CD4-positive, alpha-beta T cell (primary cell): ENCODE measurements at regions of chr6 and their contacts with region 1.

Region 1: GRCh38 chr6:149431905-149432775 is 32.1 kb downstream of the SUMO4 start:
- DNase-seq: peak; percentile 78 to 94 (median 88)
- ATAC-seq: peak; percentile 84
- H3K4me3 ChIP-seq: peak overlapping the region; percentile 17
- H3K4me3 Mint-ChIP-seq: peak overlapping the region; percentile 45
- H3K27ac ChIP-seq: no peak overlapping the region
- H3K27ac Mint-ChIP-seq: no peak overlapping the region
- H3K4me1 ChIP-seq: peaks cover 6% of the 10 kb centered on the region
- H3K4me1 Mint-ChIP-seq: peaks cover 6% of the 10 kb centered on the region
- H3K27me3 ChIP-seq: no peaks in the 10 kb centered on the region
- H3K27me3 Mint-ChIP-seq: no peaks in the 10 kb centered on the region
- CTCF ChIP-seq: peak; percentile 96

Region 2: GRCh38 chr6:148578245-148578732 is 853.9 kb before region 1 on chr6:
- CTCF ChIA-PET with region 1: no interaction called
- POLR2A ChIA-PET with region 1: no interaction called
- intact Hi-C with region 1: loop called in 1 of 2 experiments (anchors 5 kb)
- DNase-seq: peak in 9 of 14 experiments; percentile 9 to 73 (median 15)
- ATAC-seq: peak; percentile 93
- H3K4me3 ChIP-seq: no peak overlapping the region
- H3K4me3 Mint-ChIP-seq: no peak overlapping the region
- H3K27ac ChIP-seq: no peak overlapping the region
- H3K27ac Mint-ChIP-seq: no peak overlapping the region
- H3K4me1 ChIP-seq: no peaks in the 10 kb centered on the region
- H3K4me1 Mint-ChIP-seq: no peaks in the 10 kb centered on the region
- H3K27me3 ChIP-seq: peaks cover 0 to 7% of the 10 kb centered on the region in 2 experiments
- H3K27me3 Mint-ChIP-seq: peaks cover 44% of the 10 kb centered on the region
- CTCF ChIP-seq: peak; percentile 29

Region 3: DNA sequence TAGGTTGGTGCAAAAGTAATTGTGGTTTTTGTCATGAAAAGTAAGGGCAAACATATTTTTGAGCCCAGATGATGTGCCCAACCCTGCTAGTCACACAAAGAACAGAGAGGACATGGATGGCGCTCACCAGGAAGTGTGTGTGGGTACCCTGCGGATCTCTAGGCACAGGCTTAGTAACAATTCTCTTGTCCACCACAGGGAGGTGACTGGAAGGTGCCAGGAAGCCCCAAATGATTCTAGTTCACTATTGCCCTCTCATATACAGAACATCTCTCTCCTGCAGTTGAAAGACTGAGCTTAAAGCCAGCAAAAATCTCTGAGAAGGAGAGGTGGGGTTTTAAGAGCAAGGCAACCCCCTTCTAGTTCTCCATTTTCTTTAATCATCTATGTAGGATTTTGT is 386.7 kb before region 1 on chr6:
- CTCF ChIA-PET with region 1: interaction called, 10 read pairs
- POLR2A ChIA-PET with region 1: interaction called, 3 read pairs
- intact Hi-C with region 1: no loop called
- DNase-seq: peak in 4 of 14 experiments; percentile 38 to 57 (median 46)
- ATAC-seq: peak; percentile 90
- H3K4me3 ChIP-seq: no peak overlapping the region
- H3K4me3 Mint-ChIP-seq: peak overlapping the region; percentile 22
- H3K27ac ChIP-seq: no peak overlapping the region
- H3K27ac Mint-ChIP-seq: peak overlapping the region; percentile 7
- H3K4me1 ChIP-seq: peaks cover 23% of the 10 kb centered on the region
- H3K4me1 Mint-ChIP-seq: peaks cover 39% of the 10 kb centered on the region
- H3K27me3 ChIP-seq: no peaks in the 10 kb centered on the region
- H3K27me3 Mint-ChIP-seq: no peaks in the 10 kb centered on the region
- CTCF ChIP-seq: no peak

Region 4: GRCh38 chr6:149082286-149082707 is 349.8 kb before region 1 on chr6:
- CTCF ChIA-PET with region 1: interaction called, 20 read pairs
- POLR2A ChIA-PET with region 1: interaction called, 10 read pairs
- intact Hi-C with region 1: loop called (anchors 1 kb)
- DNase-seq: peak; percentile 76 to 95 (median 86)
- ATAC-seq: peak; percentile 92
- H3K4me3 ChIP-seq: no peak overlapping the region
- H3K4me3 Mint-ChIP-seq: no peak overlapping the region
- H3K27ac ChIP-seq: no peak overlapping the region
- H3K27ac Mint-ChIP-seq: no peak overlapping the region
- H3K4me1 ChIP-seq: peaks cover 15% of the 10 kb centered on the region
- H3K4me1 Mint-ChIP-seq: peaks cover 39% of the 10 kb centered on the region
- H3K27me3 ChIP-seq: no peaks in the 10 kb centered on the region
- H3K27me3 Mint-ChIP-seq: no peaks in the 10 kb centered on the region
- CTCF ChIP-seq: peak; percentile 90

Region 5: GRCh38 chr6:149235130-149235561 is 197.0 kb before region 1 on chr6:
- CTCF ChIA-PET with region 1: interaction called, 11 read pairs
- POLR2A ChIA-PET with region 1: no interaction called
- intact Hi-C with region 1: no loop called
- DNase-seq: peak in 2 of 14 experiments; percentile 46 to 47
- ATAC-seq: no peak
- H3K4me3 ChIP-seq: no peak overlapping the region
- H3K4me3 Mint-ChIP-seq: peak overlapping the region; percentile 13
- H3K27ac ChIP-seq: peak overlapping the region in 1 of 2 donors; percentile 87
- H3K27ac Mint-ChIP-seq: peak overlapping the region; percentile 87
- H3K4me1 ChIP-seq: peaks cover 35% of the 10 kb centered on the region
- H3K4me1 Mint-ChIP-seq: peaks cover 45% of the 10 kb centered on the region
- H3K27me3 ChIP-seq: no peaks in the 10 kb centered on the region
- H3K27me3 Mint-ChIP-seq: no peaks in the 10 kb centered on the region
- CTCF ChIP-seq: no peak

Region 6: GRCh38 chr6:149419696-149420404 is 12.3 kb before region 1 on chr6:
- CTCF ChIA-PET with region 1: interaction called, 14 read pairs
- POLR2A ChIA-PET with region 1: interaction called, 3 read pairs
- intact Hi-C with region 1: no loop called
- DNase-seq: no peak
- ATAC-seq: no peak
- H3K4me3 ChIP-seq: no peak overlapping the region
- H3K4me3 Mint-ChIP-seq: no peak overlapping the region
- H3K27ac ChIP-seq: no peak overlapping the region
- H3K27ac Mint-ChIP-seq: no peak overlapping the region
- H3K4me1 ChIP-seq: no peaks in the 10 kb centered on the region
- H3K4me1 Mint-ChIP-seq: peaks cover 6% of the 10 kb centered on the region
- H3K27me3 ChIP-seq: no peaks in the 10 kb centered on the region
- H3K27me3 Mint-ChIP-seq: no peaks in the 10 kb centered on the region
- CTCF ChIP-seq: no peak

Region 7: GRCh38 chr6:149454386-149454848 is 22.3 kb after region 1 on chr6:
- CTCF ChIA-PET with region 1: no interaction called
- POLR2A ChIA-PET with region 1: no interaction called
- intact Hi-C with region 1: no loop called
- DNase-seq: no peak
- ATAC-seq: no peak
- H3K4me3 ChIP-seq: no peak overlapping the region
- H3K4me3 Mint-ChIP-seq: no peak overlapping the region
- H3K27ac ChIP-seq: no peak overlapping the region
- H3K27ac Mint-ChIP-seq: no peak overlapping the region
- H3K4me1 ChIP-seq: peaks cover 12% of the 10 kb centered on the region
- H3K4me1 Mint-ChIP-seq: peaks cover 6% of the 10 kb centered on the region
- H3K27me3 ChIP-seq: no peaks in the 10 kb centered on the region
- H3K27me3 Mint-ChIP-seq: no peaks in the 10 kb centered on the region
- CTCF ChIP-seq: no peak

Region 8: DNA sequence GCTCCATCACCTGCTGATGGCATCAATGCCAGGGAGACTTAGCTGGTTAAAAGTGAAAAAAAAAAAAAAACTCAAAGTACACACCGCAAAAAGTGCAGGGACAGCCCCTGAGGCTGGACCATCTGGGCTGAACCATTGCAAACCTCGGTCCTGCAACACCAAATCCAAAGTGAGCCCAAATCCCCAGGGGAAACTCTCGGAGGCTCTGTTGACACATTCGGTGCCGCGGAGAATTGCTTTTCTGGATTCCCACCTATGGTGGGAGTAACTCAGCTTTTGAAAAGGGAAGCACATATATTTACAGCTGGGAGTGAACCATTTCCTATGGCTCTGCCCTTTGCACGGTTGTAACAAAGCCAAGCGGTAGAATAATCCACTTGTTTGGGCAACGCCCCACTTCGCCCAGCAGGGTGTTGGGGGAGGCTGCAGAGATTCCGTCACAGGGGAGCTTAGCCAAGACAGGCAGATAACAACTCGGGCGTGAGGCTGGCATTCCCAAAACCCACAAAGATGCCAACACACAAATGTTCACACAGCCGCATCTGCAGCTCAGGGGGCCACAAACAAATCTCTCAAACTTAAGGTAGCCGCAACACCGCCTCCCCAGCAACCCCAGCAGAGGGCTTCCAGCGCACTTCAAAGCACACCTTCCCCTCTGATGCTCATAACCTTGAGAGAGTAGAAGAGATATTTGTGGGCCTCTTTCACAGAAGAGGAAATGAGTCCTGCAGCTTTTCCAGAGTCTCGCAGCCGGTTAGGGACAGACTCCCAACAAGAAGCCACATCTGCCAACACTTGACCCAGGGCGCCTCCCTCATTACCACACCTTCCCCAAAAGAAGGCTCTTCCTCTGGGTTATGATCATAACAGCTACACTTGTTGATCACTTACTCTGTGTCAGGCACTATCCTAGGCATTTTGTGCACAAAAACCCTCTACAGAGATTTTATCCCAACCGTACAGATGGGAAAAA is 41.2 kb after region 1 on chr6:
- CTCF ChIA-PET with region 1: no interaction called
- POLR2A ChIA-PET with region 1: no interaction called
- intact Hi-C with region 1: no loop called
- DNase-seq: peak in 4 of 14 experiments; percentile 27 to 62 (median 42)
- ATAC-seq: peak; percentile 61
- H3K4me3 ChIP-seq: peak overlapping the region; percentile 4
- H3K4me3 Mint-ChIP-seq: peak overlapping the region; percentile 60
- H3K27ac ChIP-seq: peak overlapping the region; percentile 3 to 27
- H3K27ac Mint-ChIP-seq: peak overlapping the region; percentile 82
- H3K4me1 ChIP-seq: peaks cover 94% of the 10 kb centered on the region
- H3K4me1 Mint-ChIP-seq: peaks cover 53% of the 10 kb centered on the region
- H3K27me3 ChIP-seq: no peaks in the 10 kb centered on the region
- H3K27me3 Mint-ChIP-seq: no peaks in the 10 kb centered on the region
- CTCF ChIP-seq: peak; percentile 3

Region 9: DNA sequence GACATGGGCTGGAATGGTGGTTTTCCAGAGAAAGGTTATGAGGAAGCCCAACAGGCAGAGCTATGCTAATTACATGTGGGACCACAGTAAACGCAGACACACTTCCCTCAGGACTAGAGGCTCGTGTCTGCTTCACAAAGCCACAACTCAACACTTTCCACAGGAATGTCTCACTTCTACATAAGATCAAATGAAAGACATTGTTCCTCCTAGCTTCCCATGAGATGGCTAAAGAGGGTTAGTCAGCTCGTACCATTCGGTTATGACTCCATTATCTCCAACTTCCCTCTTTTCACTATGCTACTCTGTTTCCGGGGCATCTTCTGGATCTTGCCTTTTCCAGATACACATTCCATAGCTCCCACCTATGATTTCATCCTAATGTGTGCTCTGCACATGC is 81.8 kb after region 1 on chr6:
- CTCF ChIA-PET with region 1: interaction called, 24 read pairs
- POLR2A ChIA-PET with region 1: no interaction called
- intact Hi-C with region 1: loop called in 1 of 2 experiments (anchors 1 kb)
- DNase-seq: peak in 1 of 14 experiments; percentile 27
- ATAC-seq: no peak
- H3K4me3 ChIP-seq: no peak overlapping the region
- H3K4me3 Mint-ChIP-seq: no peak overlapping the region
- H3K27ac ChIP-seq: no peak overlapping the region
- H3K27ac Mint-ChIP-seq: no peak overlapping the region
- H3K4me1 ChIP-seq: no peaks in the 10 kb centered on the region
- H3K4me1 Mint-ChIP-seq: peaks cover 37% of the 10 kb centered on the region
- H3K27me3 ChIP-seq: no peaks in the 10 kb centered on the region
- H3K27me3 Mint-ChIP-seq: no peaks in the 10 kb centered on the region
- CTCF ChIP-seq: no peak

Region 10: DNA sequence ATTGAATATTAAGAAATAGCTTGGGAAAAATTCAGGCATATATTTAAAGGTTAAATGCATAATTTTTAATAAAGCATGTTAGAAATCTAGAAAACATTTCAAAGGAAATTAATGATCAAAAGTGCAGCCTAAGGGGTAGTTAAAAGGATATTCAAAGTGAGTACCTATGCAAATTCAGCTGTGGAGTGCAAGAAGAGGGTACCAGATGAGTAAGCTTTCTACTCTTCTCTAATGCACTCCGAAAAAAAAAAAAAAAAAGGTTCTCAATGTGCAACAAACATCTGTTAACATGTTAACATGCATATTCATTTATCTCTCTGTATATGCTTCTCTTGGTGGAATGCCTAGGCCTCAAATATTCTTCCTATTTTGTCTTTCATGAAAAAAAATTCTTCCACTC is 248.4 kb after region 1 on chr6:
- CTCF ChIA-PET with region 1: no interaction called
- POLR2A ChIA-PET with region 1: no interaction called
- intact Hi-C with region 1: no loop called
- DNase-seq: no peak
- ATAC-seq: no peak
- H3K4me3 ChIP-seq: no peak overlapping the region
- H3K4me3 Mint-ChIP-seq: no peak overlapping the region
- H3K27ac ChIP-seq: no peak overlapping the region
- H3K27ac Mint-ChIP-seq: no peak overlapping the region
- H3K4me1 ChIP-seq: no peaks in the 10 kb centered on the region
- H3K4me1 Mint-ChIP-seq: peaks cover 13% of the 10 kb centered on the region
- H3K27me3 ChIP-seq: no peaks in the 10 kb centered on the region
- H3K27me3 Mint-ChIP-seq: no peaks in the 10 kb centered on the region
- CTCF ChIP-seq: no peak